GM10248 (cell line): ENCODE measurements at regions of chr7 and their contacts with region 1.

Region 1: DNA sequence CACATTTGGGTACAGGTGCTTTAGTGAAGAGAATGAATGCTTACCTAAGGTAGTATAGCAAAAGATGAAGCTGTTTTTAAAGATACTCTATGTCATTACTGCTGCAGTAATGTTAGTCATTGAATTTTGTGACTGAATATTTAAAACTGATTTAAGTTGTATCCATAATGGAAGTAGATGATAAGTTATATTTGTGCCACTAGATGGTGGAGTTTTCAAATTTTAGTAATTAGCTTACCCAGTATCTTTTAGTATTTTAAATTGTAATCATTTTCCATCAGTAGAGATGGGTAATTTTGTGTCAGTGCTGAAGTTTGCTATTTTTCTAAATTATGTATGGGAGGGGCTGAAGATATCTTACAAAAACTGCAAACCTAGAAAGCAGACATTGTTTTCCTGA is 25.2 kb downstream of the HBP1 start:
- DNase-seq: no peak
- CTCF ChIP-seq: no peak

Region 2: GRCh38 chr7:107168233-107169119 is 25.6 kb before region 1 on chr7 and contains the start of gene HBP1:
- CTCF ChIA-PET with region 1: interaction called, 4 read pairs
- POLR2A ChIA-PET with region 1: interaction called, 10 read pairs
- DNase-seq: peak; percentile 93
- CTCF ChIP-seq: no peak

Region 3: GRCh38 chr7:107208024-107208521 is 14.0 kb after region 1 on chr7:
- CTCF ChIA-PET with region 1: interaction called, 17 read pairs
- POLR2A ChIA-PET with region 1: no interaction called
- DNase-seq: no peak
- CTCF ChIP-seq: no peak